Left cardiac atrium (tissue), 4 donors: ENCODE measurements at regions of chr15 and their contacts with region 1.

Region 1: GRCh38 chr15:26891448-26892181 is 24.8 kb downstream of the GABRA5 start:
- DNase-seq: peak; percentile 67
- ATAC-seq: peak; percentile 78

Region 2: DNA sequence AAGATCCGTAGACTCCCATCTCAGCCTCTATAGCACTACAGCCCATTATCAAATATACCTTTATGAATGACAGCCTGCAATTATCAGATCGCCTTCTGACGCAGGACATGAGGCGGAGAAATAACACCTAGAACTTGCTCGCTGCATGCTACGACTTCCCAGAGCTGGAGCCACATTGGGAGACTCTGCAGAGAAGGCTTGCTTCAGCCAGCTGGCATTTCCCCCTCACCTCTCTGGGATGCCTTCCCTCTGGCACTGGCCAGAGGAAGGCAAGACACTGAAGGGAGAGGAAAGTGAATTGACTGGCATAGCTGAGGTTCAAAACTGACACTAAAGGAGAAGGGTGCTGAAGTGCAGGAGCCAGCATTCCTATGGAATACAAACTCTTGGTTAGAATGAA is 250.5 kb before region 1 on chr15:
- intact Hi-C with region 1: no loop called
- DNase-seq: no peak
- ATAC-seq: peak in 1 of 2 donors; percentile 62

Region 3: DNA sequence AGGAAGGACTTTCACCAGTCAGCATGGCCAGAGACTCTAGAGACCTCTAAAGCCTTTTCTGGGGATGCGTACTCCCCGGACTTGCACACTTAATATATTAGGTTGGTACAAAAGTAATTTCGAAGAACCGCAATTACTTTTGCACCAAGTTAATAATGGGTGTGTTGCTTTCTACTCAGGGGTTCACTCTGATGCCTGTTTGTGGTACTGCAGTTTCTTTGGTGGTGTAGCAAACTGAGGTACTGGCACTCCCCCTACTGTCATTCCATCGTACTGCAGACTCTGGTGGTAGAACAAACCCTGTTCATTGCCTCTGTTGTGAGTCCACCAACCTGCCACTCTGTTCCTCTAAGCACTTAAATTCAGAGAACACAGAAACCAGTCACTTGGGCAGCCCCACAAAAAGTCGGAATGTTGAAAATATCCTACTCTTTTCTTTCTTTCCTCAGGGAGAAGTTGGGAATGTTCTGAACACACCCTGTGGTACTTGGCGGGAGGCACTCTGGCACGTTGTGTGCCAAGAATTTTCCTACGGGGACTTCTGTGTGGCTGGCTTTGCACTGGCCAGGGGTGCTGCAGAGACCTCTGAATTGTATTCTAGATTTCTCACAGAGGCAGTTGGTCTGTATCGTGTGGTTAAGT is 125.7 kb after region 1 on chr15:
- intact Hi-C with region 1: loop called in 1 of 2 experiments (anchors 10 kb)
- DNase-seq: peak; percentile 40
- ATAC-seq: peak in 1 of 2 donors; percentile 34

Region 4: GRCh38 chr15:27358751-27359434 is 467.3 kb after region 1 on chr15:
- intact Hi-C with region 1: loop called in 1 of 2 experiments (anchors 10 kb)
- DNase-seq: peak; percentile 30
- ATAC-seq: peak in 1 of 2 donors; percentile 41